Naive thymus-derived CD4-positive, alpha-beta T cell (primary cell): ENCODE measurements at regions of chr7 and their contacts with region 1.

Region 1: DNA sequence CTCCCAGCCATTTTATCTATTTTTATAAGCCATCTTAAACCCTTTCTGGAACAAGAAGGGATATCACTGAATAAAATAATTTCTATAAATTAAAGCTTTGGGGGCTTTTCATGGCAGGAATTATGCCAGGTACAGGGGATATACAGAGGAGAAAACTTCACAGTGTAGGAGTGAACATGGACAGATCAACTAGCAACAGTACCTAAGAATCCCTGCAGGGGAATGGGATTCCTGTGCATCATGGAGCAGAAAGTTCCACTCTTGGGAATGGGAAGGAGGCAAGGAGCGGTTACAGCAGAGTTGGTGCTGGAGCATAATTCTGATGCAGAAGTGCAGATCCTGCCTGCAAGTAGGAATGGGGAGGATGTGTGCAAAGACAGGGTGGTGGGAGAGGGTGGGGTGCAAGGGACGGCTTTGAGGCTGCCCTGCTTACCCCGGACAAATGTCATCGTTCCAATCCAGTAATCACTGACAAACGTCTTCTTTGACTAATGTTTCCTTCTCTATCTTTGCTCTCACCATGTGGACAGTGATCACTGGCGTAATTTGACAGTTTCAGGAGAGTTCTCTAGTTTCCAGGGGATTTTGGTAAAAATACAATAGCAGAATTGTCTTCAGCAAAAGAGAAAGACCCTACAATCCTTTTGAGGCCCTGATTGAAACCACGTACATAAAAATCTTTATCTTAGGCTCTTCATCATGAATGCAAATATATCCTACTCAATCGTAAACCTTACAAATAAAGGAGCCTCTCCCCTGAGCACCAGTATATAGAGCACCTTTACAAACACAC is 196.7 kb downstream of the HECW1 start:
- DNase-seq: no peak
- ATAC-seq: no peak
- H3K4me3 ChIP-seq: no peak overlapping the region
- H3K4me3 Mint-ChIP-seq: no peak overlapping the region
- H3K27ac ChIP-seq: no peak overlapping the region
- H3K27ac Mint-ChIP-seq: no peak overlapping the region
- H3K4me1 ChIP-seq: no peaks in the 10 kb centered on the region
- H3K4me1 Mint-ChIP-seq: peaks cover 0 to 16% (median 11%) of the 10 kb centered on the region in 7 donors
- H3K27me3 ChIP-seq: no peaks in the 10 kb centered on the region
- H3K27me3 Mint-ChIP-seq: no peaks in the 10 kb centered on the region

Region 2: GRCh38 chr7:42091461-42092291 is 1217.4 kb before region 1 on chr7:
- CTCF ChIA-PET with region 1: no interaction called
- POLR2A ChIA-PET with region 1: no interaction called
- intact Hi-C with region 1: no loop called
- DNase-seq: no peak
- ATAC-seq: no peak
- H3K4me3 ChIP-seq: no peak overlapping the region
- H3K4me3 Mint-ChIP-seq: no peak overlapping the region
- H3K27ac ChIP-seq: no peak overlapping the region
- H3K27ac Mint-ChIP-seq: no peak overlapping the region
- H3K4me1 ChIP-seq: no peaks in the 10 kb centered on the region
- H3K4me1 Mint-ChIP-seq: peaks cover 0 to 3% (median 0%) of the 10 kb centered on the region in 7 donors
- H3K27me3 ChIP-seq: no peaks in the 10 kb centered on the region
- H3K27me3 Mint-ChIP-seq: peaks cover 0 to 21% (median 5%) of the 10 kb centered on the region in 5 donors

Region 3: GRCh38 chr7:43372676-43373355 is 63.7 kb after region 1 on chr7:
- CTCF ChIA-PET with region 1: no interaction called
- POLR2A ChIA-PET with region 1: no interaction called
- intact Hi-C with region 1: loop called in 1 of 2 experiments (anchors 2 kb)
- DNase-seq: no peak
- ATAC-seq: no peak
- H3K4me3 ChIP-seq: no peak overlapping the region
- H3K4me3 Mint-ChIP-seq: no peak overlapping the region
- H3K27ac ChIP-seq: no peak overlapping the region
- H3K27ac Mint-ChIP-seq: no peak overlapping the region
- H3K4me1 ChIP-seq: no peaks in the 10 kb centered on the region
- H3K4me1 Mint-ChIP-seq: no peaks in the 10 kb centered on the region
- H3K27me3 ChIP-seq: no peaks in the 10 kb centered on the region
- H3K27me3 Mint-ChIP-seq: peaks cover 2 to 21% (median 8%) of the 10 kb centered on the region in 5 donors